ENCODE measurements at regions of chr16 and their contacts with region 1.

Region 1: DNA sequence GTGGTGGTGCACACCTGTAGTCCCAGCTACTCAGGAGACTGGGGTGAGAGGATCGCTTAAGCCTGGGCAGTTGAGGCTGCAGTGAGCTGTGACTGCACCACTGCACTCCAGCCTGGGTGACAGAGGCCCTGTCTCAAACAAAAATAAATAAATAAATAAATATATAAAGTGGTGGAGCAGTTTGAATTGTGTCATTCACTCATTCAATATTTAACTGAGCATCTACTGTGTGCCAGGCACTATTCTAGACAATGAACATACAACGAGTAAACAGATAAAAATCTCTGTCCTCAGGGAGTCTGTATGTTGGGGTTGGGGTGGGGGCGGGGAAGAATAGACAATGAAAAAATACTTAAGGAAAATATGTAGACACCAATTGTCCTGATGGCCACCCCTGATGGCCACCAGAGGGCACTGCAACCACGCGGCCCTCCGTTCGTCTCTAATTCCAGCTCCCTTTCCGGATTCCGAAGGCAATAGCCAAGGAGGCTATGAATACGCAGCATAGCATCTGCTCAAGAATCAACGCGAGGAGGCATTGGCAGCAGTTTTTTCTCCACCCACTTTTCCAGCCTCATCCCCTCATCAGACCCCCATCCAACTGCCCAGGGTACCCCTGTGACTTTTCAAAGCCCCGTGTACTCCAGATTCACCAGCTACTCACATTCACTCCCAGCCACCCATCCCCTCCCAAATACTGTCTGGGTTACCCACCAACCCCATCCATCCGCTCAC is 21.4 kb downstream of the QPRT start:
- DNase-seq: peak; percentile 54
- ATAC-seq: no peak
- H3K4me3 Mint-ChIP-seq: no peak overlapping the region
- H3K27ac Mint-ChIP-seq: peak overlapping the region; percentile 50
- H3K4me1 Mint-ChIP-seq: peaks cover 37% of the 10 kb centered on the region
- H3K27me3 Mint-ChIP-seq: no peaks in the 10 kb centered on the region
- CTCF ChIP-seq: no peak

Region 2: GRCh38 chr16:29710227-29711219 is 10.1 kb after region 1 on chr16:
- CTCF ChIA-PET with region 1: interaction called, 7 read pairs
- POLR2A ChIA-PET with region 1: interaction called, 4 read pairs
- intact Hi-C with region 1: loop called (anchors 1 kb)
- DNase-seq: no peak
- ATAC-seq: peak; percentile 97
- H3K4me3 Mint-ChIP-seq: no peak overlapping the region
- H3K27ac Mint-ChIP-seq: no peak overlapping the region
- H3K4me1 Mint-ChIP-seq: peaks cover 26% of the 10 kb centered on the region
- H3K27me3 Mint-ChIP-seq: no peaks in the 10 kb centered on the region
- CTCF ChIP-seq: peak; percentile 30

Region 3: DNA sequence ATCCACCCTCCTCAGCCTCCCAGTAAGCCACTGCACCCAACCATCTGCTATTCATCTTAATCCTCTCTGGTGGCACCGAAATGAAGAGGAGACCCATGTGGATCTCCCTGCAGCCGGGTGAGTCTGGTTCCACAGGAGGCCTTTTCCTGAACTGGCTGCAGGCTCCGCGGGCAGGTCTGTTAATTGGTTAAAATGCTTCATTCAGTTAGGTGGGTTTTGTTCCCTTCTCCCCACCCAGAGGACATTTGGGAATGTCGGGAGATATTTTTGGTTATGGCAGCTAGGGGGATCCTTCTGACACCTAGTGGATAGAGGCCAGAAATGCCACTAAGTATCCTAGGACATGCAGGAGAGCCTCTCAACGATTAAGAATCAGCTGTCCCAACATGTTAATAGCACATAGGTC is 28.7 kb after region 1 on chr16:
- CTCF ChIA-PET with region 1: interaction called, 19 read pairs
- POLR2A ChIA-PET with region 1: no interaction called
- intact Hi-C with region 1: no loop called
- DNase-seq: no peak
- ATAC-seq: no peak
- H3K4me3 Mint-ChIP-seq: no peak overlapping the region
- H3K27ac Mint-ChIP-seq: no peak overlapping the region
- H3K4me1 Mint-ChIP-seq: peaks cover 27% of the 10 kb centered on the region
- H3K27me3 Mint-ChIP-seq: no peaks in the 10 kb centered on the region
- CTCF ChIP-seq: no peak

Region 4: GRCh38 chr16:29790183-29790952 is 89.9 kb after region 1 on chr16 and contains the start of gene KIF22:
- CTCF ChIA-PET with region 1: interaction called, 24 read pairs
- POLR2A ChIA-PET with region 1: interaction called, 14 read pairs
- intact Hi-C with region 1: loop called (anchors 1 kb)
- DNase-seq: peak; percentile 99
- ATAC-seq: peak; percentile 97
- H3K4me3 Mint-ChIP-seq: peak within 1 kb of the TSS; percentile 98
- H3K27ac Mint-ChIP-seq: peak within 1 kb of the TSS; percentile 93
- H3K4me1 Mint-ChIP-seq: peaks cover 34% of the 10 kb centered on the region
- H3K27me3 Mint-ChIP-seq: no peaks in the 10 kb centered on the region
- CTCF ChIP-seq: no peak
- total RNA-seq, gene KIF22: 33.1 and 40.1 TPM in 2 replicates

Region 5: GRCh38 chr16:29848420-29849297 is 148.2 kb after region 1 on chr16:
- CTCF ChIA-PET with region 1: interaction called, 12 read pairs
- POLR2A ChIA-PET with region 1: interaction called, 5 read pairs
- intact Hi-C with region 1: loop called (anchors 1 kb)
- DNase-seq: peak; percentile 60
- ATAC-seq: peak; percentile 82
- H3K4me3 Mint-ChIP-seq: no peak overlapping the region
- H3K27ac Mint-ChIP-seq: no peak overlapping the region
- H3K4me1 Mint-ChIP-seq: no peaks in the 10 kb centered on the region
- H3K27me3 Mint-ChIP-seq: no peaks in the 10 kb centered on the region
- CTCF ChIP-seq: peak; percentile 52

Measured in activated B cell treated with CpG ODN at 0.5 μM for 24 hours (primary cell).